ENCODE measurements at regions of chr14 and their contacts with region 1.

Region 1: GRCh38 chr14:21071225-21072030 is 1.3 kb downstream of the ARHGEF40 start:
- DNase-seq: peak; percentile 71
- ATAC-seq: peak; percentile 57
- H3K4me3 Mint-ChIP-seq: peak overlapping the region; percentile 62
- H3K27ac Mint-ChIP-seq: no peak overlapping the region
- H3K4me1 Mint-ChIP-seq: peaks cover 31% of the 10 kb centered on the region
- H3K27me3 Mint-ChIP-seq: peaks cover 65% of the 10 kb centered on the region

Region 2: DNA sequence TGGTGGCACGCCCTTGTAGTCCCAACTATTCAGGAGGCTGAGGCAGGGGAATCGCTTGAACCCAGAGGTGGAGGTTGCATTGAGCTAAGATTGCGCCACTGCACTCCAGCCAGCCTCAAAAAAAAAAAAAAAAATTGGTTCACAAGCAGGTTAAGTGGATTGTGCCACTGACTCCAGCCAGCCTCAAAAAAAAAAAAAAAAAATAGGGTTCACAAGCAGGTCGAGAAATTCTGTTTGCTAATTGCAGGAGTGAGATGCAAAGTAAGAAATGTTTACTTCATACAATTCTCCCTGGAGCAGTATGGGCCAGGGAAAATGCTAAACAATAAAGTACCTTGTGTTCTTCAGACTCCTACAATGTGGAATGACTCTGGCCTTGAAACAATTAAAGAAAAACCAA is 297.1 kb before region 1 on chr14:
- CTCF ChIA-PET with region 1: no interaction called
- DNase-seq: no peak
- ATAC-seq: no peak
- H3K4me3 Mint-ChIP-seq: no peak overlapping the region
- H3K27ac Mint-ChIP-seq: no peak overlapping the region
- H3K4me1 Mint-ChIP-seq: peaks cover 2% of the 10 kb centered on the region
- H3K27me3 Mint-ChIP-seq: peaks cover 31% of the 10 kb centered on the region

Region 3: GRCh38 chr14:20956376-20956976 is 115.0 kb before region 1 on chr14:
- CTCF ChIA-PET with region 1: no interaction called
- DNase-seq: no peak
- ATAC-seq: peak; percentile 34
- H3K4me3 Mint-ChIP-seq: no peak overlapping the region
- H3K27ac Mint-ChIP-seq: no peak overlapping the region
- H3K4me1 Mint-ChIP-seq: peaks cover 35% of the 10 kb centered on the region
- H3K27me3 Mint-ChIP-seq: peaks cover 35% of the 10 kb centered on the region

Region 4: GRCh38 chr14:21049271-21049673 is 22.2 kb before region 1 on chr14:
- CTCF ChIA-PET with region 1: interaction called, 16 read pairs
- DNase-seq: no peak
- ATAC-seq: no peak
- H3K4me3 Mint-ChIP-seq: no peak overlapping the region
- H3K27ac Mint-ChIP-seq: no peak overlapping the region
- H3K4me1 Mint-ChIP-seq: peaks cover 7% of the 10 kb centered on the region
- H3K27me3 Mint-ChIP-seq: peaks cover 29% of the 10 kb centered on the region

Region 5: DNA sequence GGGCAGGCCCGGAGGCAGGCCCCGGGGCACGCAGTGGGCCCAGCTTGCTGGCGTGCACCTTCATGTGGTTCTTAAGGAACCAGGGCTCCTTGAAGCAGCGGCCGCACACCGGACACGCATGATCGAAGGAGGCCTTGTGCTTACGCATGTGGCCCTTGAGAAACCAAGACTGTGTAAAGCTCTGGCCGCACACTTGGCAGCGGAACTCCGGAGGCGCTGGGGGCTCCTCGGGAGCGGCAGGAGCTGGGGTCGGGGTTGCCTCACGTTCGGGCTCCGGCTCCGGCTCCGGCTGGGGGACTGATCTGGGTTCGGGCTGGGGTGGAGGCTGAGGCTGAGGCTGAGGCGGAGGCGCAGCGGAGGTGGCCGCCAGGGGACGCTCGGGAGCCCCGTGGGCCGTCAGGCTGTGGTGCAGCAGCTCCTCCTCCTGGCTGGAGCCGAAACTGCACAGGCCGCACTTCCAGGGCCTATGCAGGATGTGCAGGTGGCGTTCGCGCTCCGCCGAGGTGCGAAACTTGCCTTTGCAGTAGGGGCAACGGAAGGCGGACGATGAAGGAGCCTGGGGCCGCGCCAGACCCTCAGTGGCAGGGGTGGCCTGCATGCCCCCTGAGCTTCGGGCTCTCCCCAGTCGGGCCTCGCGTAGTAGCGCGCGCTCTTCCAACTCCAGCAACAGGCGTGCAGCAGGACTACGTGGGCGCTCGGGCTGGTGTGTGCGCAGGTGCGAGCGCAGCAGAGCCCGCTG is 21.0 kb after region 1 on chr14:
- CTCF ChIA-PET with region 1: interaction called, 96 read pairs
- DNase-seq: peak; percentile 91
- ATAC-seq: peak; percentile 85
- H3K4me3 Mint-ChIP-seq: no peak overlapping the region
- H3K27ac Mint-ChIP-seq: no peak overlapping the region
- H3K4me1 Mint-ChIP-seq: peaks cover 20% of the 10 kb centered on the region
- H3K27me3 Mint-ChIP-seq: peaks cover 7% of the 10 kb centered on the region

Region 6: GRCh38 chr14:21109377-21110260 is 38.2 kb after region 1 on chr14:
- CTCF ChIA-PET with region 1: interaction called, 109 read pairs
- DNase-seq: peak; percentile 57
- ATAC-seq: peak; percentile 71
- H3K4me3 Mint-ChIP-seq: no peak overlapping the region
- H3K27ac Mint-ChIP-seq: no peak overlapping the region
- H3K4me1 Mint-ChIP-seq: peaks cover 32% of the 10 kb centered on the region
- H3K27me3 Mint-ChIP-seq: no peaks in the 10 kb centered on the region

Measured in activated CD8-positive, alpha-beta memory T cell treated with anti-CD3 and anti-CD28 coated beads, Interleukin-2, amount 10 ng/mL, durations not matched to agents 7 days and 5 days (primary cell).